ENCODE measurements at regions of chr3 and their contacts with region 1.

Region 1: DNA sequence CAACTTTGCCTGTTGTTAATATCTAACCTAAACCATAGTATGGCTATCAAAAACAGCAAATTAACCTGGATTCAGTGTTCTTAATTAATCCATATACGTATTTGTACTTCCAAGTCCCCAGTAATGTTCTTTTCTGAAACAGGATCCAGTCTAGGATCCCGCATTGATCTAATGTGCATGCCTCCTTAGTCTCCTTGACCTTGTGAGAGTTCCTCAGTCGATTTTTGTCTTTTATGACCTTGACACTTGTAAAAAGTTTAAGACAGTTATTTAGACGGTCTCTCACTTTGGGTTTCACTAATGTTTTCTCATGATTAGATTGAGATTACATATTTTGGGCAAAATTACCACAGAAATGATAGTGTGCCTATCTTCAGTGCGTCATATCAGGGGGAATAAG is 69.4 kb downstream of the TGFBR2 start:
- DNase-seq: no peak
- H3K4me3 ChIP-seq: no peak overlapping the region
- H3K27ac ChIP-seq: peak overlapping the region in 1 of 4 donors; percentile 8
- H3K4me1 ChIP-seq: peaks cover 0 to 62% (median 58%) of the 10 kb centered on the region in 4 donors
- H3K27me3 ChIP-seq: no peaks in the 10 kb centered on the region
- CTCF ChIP-seq: no peak
- EP300 ChIP-seq: no peak
- POLR2A ChIP-seq: no peak

Region 2: GRCh38 chr3:30664884-30665283 is 10.9 kb before region 1 on chr3:
- intact Hi-C with region 1: loop called (anchors 1 kb)
- DNase-seq: no peak
- H3K4me3 ChIP-seq: no peak overlapping the region
- H3K27ac ChIP-seq: peak overlapping the region in 1 of 4 donors; percentile 1
- H3K4me1 ChIP-seq: peaks cover 0 to 79% (median 51%) of the 10 kb centered on the region in 4 donors
- H3K27me3 ChIP-seq: no peaks in the 10 kb centered on the region
- CTCF ChIP-seq: no peak
- EP300 ChIP-seq: no peak
- POLR2A ChIP-seq: no peak

Measured in sigmoid colon (tissue), 7 donors.